ENCODE measurements at regions of chr6 and their contacts with region 1.

Region 1: GRCh38 chr6:44172731-44173500 is 14.3 kb downstream of the CAPN11 start:
- DNase-seq: peak; percentile 85 to 88
- ATAC-seq: peak; percentile 85 to 95 (median 93)
- H3K4me3 ChIP-seq: no peak overlapping the region
- H3K27ac ChIP-seq: no peak overlapping the region
- H3K4me1 ChIP-seq: peaks cover 3 to 34% (median 15%) of the 10 kb centered on the region in 9 donors
- H3K27me3 ChIP-seq: no peaks in the 10 kb centered on the region
- CTCF ChIP-seq: peak; percentile 83 to 95 (median 93)

Region 2: DNA sequence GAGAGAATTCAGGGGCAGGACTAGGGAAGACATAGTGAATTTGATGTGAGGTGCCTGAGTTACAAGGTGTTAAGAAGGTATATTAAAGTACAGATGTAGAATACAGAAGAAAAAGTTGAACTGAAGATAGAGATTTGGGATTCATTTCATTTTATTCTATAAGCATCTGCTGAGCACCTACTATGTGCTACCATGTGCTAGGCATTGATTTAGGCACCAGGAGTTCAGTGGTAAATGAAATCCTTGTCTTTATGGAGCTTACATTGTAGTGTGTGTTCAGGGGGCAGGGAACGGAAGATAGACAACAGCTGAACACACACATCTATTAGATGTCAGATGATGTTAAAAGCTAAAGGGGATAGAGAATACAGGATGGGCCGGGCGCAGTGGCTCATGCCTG is 525.3 kb before region 1 on chr6:
- intact Hi-C with region 1: no loop called
- DNase-seq: no peak
- ATAC-seq: no peak
- H3K4me3 ChIP-seq: no peak overlapping the region
- H3K27ac ChIP-seq: no peak overlapping the region
- H3K4me1 ChIP-seq: peaks cover 0 to 15% (median 12%) of the 10 kb centered on the region in 9 donors
- H3K27me3 ChIP-seq: no peaks in the 10 kb centered on the region
- CTCF ChIP-seq: no peak

Region 3: GRCh38 chr6:43737272-43738081 is 435.4 kb before region 1 on chr6:
- intact Hi-C with region 1: no loop called
- DNase-seq: peak; percentile 44 to 67
- ATAC-seq: peak; percentile 81 to 95 (median 88)
- H3K4me3 ChIP-seq: no peak overlapping the region
- H3K27ac ChIP-seq: no peak overlapping the region
- H3K4me1 ChIP-seq: peaks cover 0 to 18% (median 5%) of the 10 kb centered on the region in 9 donors
- H3K27me3 ChIP-seq: no peaks in the 10 kb centered on the region
- CTCF ChIP-seq: no peak

Region 4: DNA sequence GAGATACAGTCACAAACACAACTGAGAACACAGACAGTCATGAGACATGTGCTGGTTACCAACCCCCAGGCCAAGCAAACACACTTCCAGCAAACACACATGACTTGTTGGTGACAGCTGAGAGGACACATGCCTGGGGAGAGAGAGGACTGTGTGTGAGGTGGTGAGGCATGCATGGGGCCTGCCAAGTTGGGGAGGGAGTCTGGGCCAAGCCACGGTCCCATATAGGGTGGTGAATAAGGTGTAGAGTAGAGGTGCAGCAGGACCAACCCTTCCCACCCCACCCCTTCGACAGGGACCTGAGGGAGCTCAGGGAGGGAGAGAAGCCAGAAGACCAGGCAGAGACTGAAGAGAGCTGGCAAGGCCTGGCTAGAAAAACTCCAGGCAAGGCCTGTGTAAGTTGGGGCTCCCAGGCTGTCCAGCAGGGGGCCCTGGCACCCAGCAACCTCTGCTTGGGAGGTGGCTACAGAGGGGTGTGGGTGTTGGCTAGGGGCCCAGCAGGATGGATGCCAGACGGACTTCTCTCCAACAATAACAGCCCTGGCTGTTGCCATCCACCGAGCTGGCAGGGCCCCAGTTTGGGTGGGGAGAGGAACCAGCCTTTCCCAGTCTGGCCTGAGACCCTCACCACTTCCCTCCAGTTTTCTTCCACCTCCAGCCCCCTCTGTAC is 48.5 kb after region 1 on chr6:
- intact Hi-C with region 1: loop called in 3 of 10 experiments (anchors 5 kb)
- DNase-seq: peak; percentile 92 to 94
- ATAC-seq: peak; percentile 35 to 80 (median 68)
- H3K4me3 ChIP-seq: peak overlapping the region in 5 of 10 donors; percentile 72 to 87 (median 75)
- H3K27ac ChIP-seq: peak overlapping the region; percentile 82 to 98 (median 94)
- H3K4me1 ChIP-seq: peaks cover 40 to 97% (median 92%) of the 10 kb centered on the region in 9 donors
- H3K27me3 ChIP-seq: no peaks in the 10 kb centered on the region
- CTCF ChIP-seq: peak; percentile 61 to 93 (median 80)

Region 5: DNA sequence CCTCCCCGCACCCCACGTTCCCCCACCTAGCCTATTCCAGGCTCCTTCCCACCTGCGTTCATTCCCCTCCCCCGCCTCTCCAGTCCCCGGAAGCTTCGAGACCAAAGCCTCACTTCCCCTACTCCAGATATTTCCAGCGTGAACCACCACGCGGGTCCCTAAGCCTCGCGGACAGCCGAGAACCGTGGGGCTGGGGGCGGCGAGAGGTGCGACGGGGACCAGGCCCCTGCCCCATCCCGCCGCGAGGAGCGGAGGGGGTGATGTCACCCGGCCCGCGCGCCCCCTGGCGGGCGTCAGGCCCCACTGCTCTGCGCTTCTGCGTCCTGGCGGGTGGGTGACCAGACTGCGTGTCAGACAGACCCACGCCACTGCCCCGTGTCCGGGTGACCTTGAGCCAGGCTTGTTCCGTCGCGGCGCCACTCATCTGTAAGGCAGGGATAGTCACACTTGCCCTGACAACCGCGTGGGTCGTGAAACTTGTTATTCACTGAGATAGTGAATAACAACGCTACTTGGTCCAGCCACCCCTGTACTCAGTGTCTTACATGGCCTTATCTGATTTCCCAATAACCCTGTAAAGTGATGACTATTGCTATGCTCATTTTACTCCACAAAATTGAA is 65.0 kb after region 1 on chr6:
- intact Hi-C with region 1: loop called (anchors 1 to 5 kb)
- DNase-seq: peak; percentile 77 to 87
- ATAC-seq: peak; percentile 76 to 87 (median 81)
- H3K4me3 ChIP-seq: peak overlapping the region; percentile 49 to 71 (median 62)
- H3K27ac ChIP-seq: peak overlapping the region; percentile 91 to 98 (median 94)
- H3K4me1 ChIP-seq: peaks cover 21 to 57% (median 49%) of the 10 kb centered on the region in 9 donors
- H3K27me3 ChIP-seq: no peaks in the 10 kb centered on the region
- CTCF ChIP-seq: peak; percentile 97 to 99 (median 98)

Region 6: GRCh38 chr6:44257025-44257752 is 84.3 kb after region 1 on chr6 and contains the start of gene SLC35B2:
- intact Hi-C with region 1: loop called in 2 of 10 experiments (anchors 5 kb)
- DNase-seq: peak; percentile 68 to 70
- ATAC-seq: peak; percentile 66 to 89 (median 76)
- H3K4me3 ChIP-seq: peak within 1 kb of the TSS; percentile 80 to 100 (median 98)
- H3K27ac ChIP-seq: peak within 1 kb of the TSS; percentile 87 to 98 (median 96)
- H3K4me1 ChIP-seq: peaks cover 11 to 58% (median 22%) of the 10 kb centered on the region in 9 donors
- H3K27me3 ChIP-seq: no peaks in the 10 kb centered on the region
- CTCF ChIP-seq: peak; percentile 55 to 94 (median 80)
- total RNA-seq, gene SLC35B2: 19.4 to 29.8 (median 23.7) TPM

Region 7: GRCh38 chr6:44338228-44339122 is 165.6 kb after region 1 on chr6:
- intact Hi-C with region 1: loop called in 7 of 10 experiments (anchors 2 to 10 kb)
- DNase-seq: peak; percentile 35 to 53
- ATAC-seq: peak; percentile 67 to 83 (median 74)
- H3K4me3 ChIP-seq: no peak overlapping the region
- H3K27ac ChIP-seq: no peak overlapping the region
- H3K4me1 ChIP-seq: peaks cover 0 to 13% (median 5%) of the 10 kb centered on the region in 9 donors
- H3K27me3 ChIP-seq: peaks cover 0 to 33% (median 11%) of the 10 kb centered on the region in 7 donors
- CTCF ChIP-seq: peak; percentile 48 to 76 (median 72)

Region 8: GRCh38 chr6:45187836-45188235 is 1014.9 kb after region 1 on chr6:
- intact Hi-C with region 1: no loop called
- DNase-seq: no peak
- ATAC-seq: no peak
- H3K4me3 ChIP-seq: no peak overlapping the region
- H3K27ac ChIP-seq: no peak overlapping the region
- H3K4me1 ChIP-seq: no peaks in the 10 kb centered on the region
- H3K27me3 ChIP-seq: no peaks in the 10 kb centered on the region
- CTCF ChIP-seq: no peak